GM12878 (cell line): ENCODE measurements at regions of chr7 and their contacts with region 1.

Region 1: DNA sequence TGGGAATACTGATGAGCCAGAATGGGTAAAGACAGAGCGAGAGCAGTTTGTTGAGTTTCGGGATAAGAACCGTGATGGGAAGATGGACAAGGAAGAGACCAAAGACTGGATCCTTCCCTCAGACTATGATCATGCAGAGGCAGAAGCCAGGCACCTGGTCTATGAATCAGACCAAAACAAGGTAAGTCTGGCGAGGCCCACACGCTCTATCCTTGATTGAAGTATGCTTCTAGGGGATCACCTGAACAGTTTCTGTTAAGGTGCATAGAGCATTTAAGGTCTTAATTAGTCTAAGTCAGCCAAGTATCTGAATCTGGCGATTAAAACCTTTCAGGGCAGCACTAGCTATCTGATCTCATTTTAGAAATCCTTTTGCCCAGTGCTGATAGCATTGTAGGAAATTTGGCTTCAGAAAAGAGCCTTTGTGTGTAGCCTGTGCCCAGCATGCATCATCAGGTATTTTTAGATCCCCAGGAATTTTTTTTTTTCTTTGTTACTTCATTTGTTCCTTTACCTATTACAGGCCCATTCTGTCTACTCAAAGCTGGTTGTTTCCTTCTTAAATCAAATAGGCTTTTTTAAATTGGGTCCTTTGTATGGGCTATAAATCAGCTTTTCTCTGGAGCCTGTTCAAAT is 8.0 kb downstream of the OPN1SW start:
- DNase-seq: no peak
- ATAC-seq: no peak
- H3K4me3 ChIP-seq: no peak overlapping the region
- H3K27ac ChIP-seq: no peak overlapping the region
- H3K4me1 ChIP-seq: no peaks in the 10 kb centered on the region
- H3K27me3 ChIP-seq: no peaks in the 10 kb centered on the region
- CTCF ChIP-seq: no peak
- EP300 ChIP-seq: no peak
- POLR2A ChIP-seq: no peak
- RAD21 ChIP-seq: no peak

Region 2: DNA sequence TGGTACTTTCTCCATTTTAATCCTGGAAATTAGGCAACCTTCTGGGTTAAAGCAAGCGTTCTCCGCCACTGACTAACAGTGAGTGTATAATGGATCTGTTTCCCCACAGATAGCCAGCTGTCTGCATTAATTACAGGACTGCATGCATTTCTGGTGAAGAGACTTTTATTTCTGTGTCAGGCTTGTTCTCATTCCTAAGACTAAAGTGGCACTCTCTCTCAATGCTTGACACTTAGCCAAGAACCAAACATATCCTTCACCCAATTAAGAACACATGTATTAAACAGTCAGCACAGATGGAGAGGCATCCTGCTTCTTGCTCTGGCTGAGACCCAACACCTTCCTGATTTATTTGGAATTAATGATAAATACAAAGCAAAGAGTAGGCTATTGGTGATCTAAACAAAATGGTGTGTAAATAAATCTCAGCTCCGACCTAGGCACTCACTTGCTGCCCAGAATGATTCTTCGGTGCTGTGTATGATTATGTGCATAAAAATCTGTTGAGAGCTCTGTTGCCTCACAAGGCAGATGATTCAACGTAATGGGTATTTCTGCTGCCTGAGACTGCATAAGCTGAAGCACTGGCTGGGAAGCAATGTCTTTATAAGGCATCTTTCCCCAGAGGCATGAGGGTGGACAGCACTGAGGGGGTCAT is 11.6 kb before region 1 on chr7:
- CTCF ChIA-PET with region 1: no interaction called
- POLR2A ChIA-PET with region 1: no interaction called
- RAD21 ChIA-PET with region 1: no interaction called
- SMC1A ChIA-PET with region 1: interaction called, 11 read pairs
- in situ Hi-C with region 1: no loop called
- intact Hi-C with region 1: no loop called
- DNase-seq: no peak
- ATAC-seq: no peak
- H3K4me3 ChIP-seq: no peak overlapping the region
- H3K27ac ChIP-seq: no peak overlapping the region
- H3K4me1 ChIP-seq: no peaks in the 10 kb centered on the region
- H3K27me3 ChIP-seq: no peaks in the 10 kb centered on the region
- CTCF ChIP-seq: no peak
- EP300 ChIP-seq: no peak
- POLR2A ChIP-seq: no peak
- RAD21 ChIP-seq: no peak

Region 3: GRCh38 chr7:128997181-128997580 is 229.6 kb after region 1 on chr7:
- CTCF ChIA-PET with region 1: no interaction called
- POLR2A ChIA-PET with region 1: no interaction called
- RAD21 ChIA-PET with region 1: no interaction called
- SMC1A ChIA-PET with region 1: no interaction called
- in situ Hi-C with region 1: no loop called
- intact Hi-C with region 1: no loop called
- DNase-seq: no peak
- ATAC-seq: no peak
- H3K4me3 ChIP-seq: no peak overlapping the region
- H3K27ac ChIP-seq: no peak overlapping the region
- H3K4me1 ChIP-seq: no peaks in the 10 kb centered on the region
- H3K27me3 ChIP-seq: no peaks in the 10 kb centered on the region
- CTCF ChIP-seq: no peak
- EP300 ChIP-seq: no peak
- POLR2A ChIP-seq: no peak
- RAD21 ChIP-seq: no peak